K562 (cell line): ENCODE measurements at regions of chr1 and their contacts with region 1.

Region 1: GRCh38 chr1:40691538-40692428 is at the start of gene NFYC:
- DNase-seq: peak; percentile 99 to 100 (median 99)
- ATAC-seq: peak; percentile 94
- H3K4me3 ChIP-seq: peak within 1 kb of the TSS; percentile 76
- H3K27ac ChIP-seq: peak within 1 kb of the TSS; percentile 100
- H3K4me1 ChIP-seq: peaks cover 8 to 27% of the 10 kb centered on the region in 2 experiments
- H3K27me3 ChIP-seq: no peaks in the 10 kb centered on the region
- CTCF ChIP-seq: peak in 2 of 3 experiments; percentile 8 to 11; a peak in 2 of 6 replicates
- EP300 ChIP-seq: peak; percentile 60; the same call in 1 of the 2 replicates
- POLR2A ChIP-seq: peak; percentile 98
- RAD21 ChIP-seq: peak in 1 of 2 experiments; percentile 21; a peak in 2 of 4 replicates
- polyA plus RNA-seq, gene NFYC: 4.8 to 7.2 TPM

Region 2: GRCh38 chr1:40676501-40676900 is 15.3 kb before region 1 on chr1:
- CTCF ChIA-PET with region 1: no interaction called
- POLR2A ChIA-PET with region 1: interaction called, 44 read pairs
- in situ Hi-C with region 1: no loop called
- intact Hi-C with region 1: no loop called
- DNase-seq: no peak
- ATAC-seq: no peak
- H3K4me3 ChIP-seq: no peak overlapping the region
- H3K27ac ChIP-seq: no peak overlapping the region
- H3K4me1 ChIP-seq: no peaks in the 10 kb centered on the region
- H3K27me3 ChIP-seq: peaks cover 0 to 5% of the 10 kb centered on the region in 2 experiments; a peak in 1 of 5 replicates
- CTCF ChIP-seq: no peak
- EP300 ChIP-seq: no peak
- POLR2A ChIP-seq: no peak
- RAD21 ChIP-seq: no peak

Region 3: DNA sequence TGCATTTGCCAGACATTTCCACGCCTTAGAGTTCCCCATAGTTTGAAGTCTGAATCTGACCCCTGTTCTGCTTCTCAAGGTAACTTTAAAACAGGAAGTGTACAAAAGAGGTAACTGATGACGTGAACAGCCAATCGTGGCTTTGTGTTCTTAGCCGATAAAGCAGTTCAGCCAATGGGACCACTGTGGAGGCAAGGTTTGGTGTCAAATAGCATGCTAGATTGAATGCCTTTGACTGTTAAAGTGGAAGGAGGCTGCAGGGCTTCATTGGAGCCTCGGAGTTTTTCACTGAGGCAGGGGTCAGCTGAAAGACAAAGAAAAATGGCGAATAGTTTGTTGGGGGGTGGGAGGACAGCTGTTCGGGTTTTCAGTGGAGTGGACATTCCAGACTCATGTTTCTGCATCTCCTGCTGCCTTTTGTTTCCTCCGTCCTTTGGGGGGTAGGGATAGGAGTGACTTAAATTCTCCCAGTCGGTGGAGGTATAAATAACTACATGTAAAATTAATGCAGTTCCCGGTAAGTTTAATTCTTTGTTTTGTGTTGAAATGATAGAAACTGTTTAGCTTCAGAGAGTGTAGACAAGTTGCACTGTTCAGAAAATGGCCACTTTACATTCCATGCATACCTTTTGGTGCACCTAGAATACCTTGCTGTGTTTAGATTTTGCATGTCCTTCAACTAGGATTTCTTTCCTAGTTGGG is 17.5 kb after region 1 on chr1:
- CTCF ChIA-PET with region 1: no interaction called
- POLR2A ChIA-PET with region 1: interaction called, 212 read pairs
- in situ Hi-C with region 1: no loop called
- intact Hi-C with region 1: no loop called
- DNase-seq: peak; percentile 87 to 98 (median 92)
- ATAC-seq: peak; percentile 94
- H3K4me3 ChIP-seq: peak overlapping the region; percentile 49
- H3K27ac ChIP-seq: peak overlapping the region; percentile 90
- H3K4me1 ChIP-seq: peaks cover 0 to 41% of the 10 kb centered on the region in 2 experiments; a peak in 4 of 5 replicates
- H3K27me3 ChIP-seq: no peaks in the 10 kb centered on the region
- CTCF ChIP-seq: no peak
- EP300 ChIP-seq: 0 out of 2 replicates have a peak, but pooled peaks have one; percentile 23
- POLR2A ChIP-seq: peak; percentile 85
- RAD21 ChIP-seq: no peak; a peak in 1 of 4 replicates

Region 4: GRCh38 chr1:40715491-40716059 is 23.8 kb after region 1 on chr1:
- CTCF ChIA-PET with region 1: no interaction called
- POLR2A ChIA-PET with region 1: interaction called, 212 read pairs
- in situ Hi-C with region 1: no loop called
- intact Hi-C with region 1: no loop called
- DNase-seq: no peak
- ATAC-seq: no peak
- H3K4me3 ChIP-seq: no peak overlapping the region
- H3K27ac ChIP-seq: no peak overlapping the region
- H3K4me1 ChIP-seq: peaks cover 0 to 23% of the 10 kb centered on the region in 2 experiments; a peak in 3 of 5 replicates
- H3K27me3 ChIP-seq: no peaks in the 10 kb centered on the region
- CTCF ChIP-seq: no peak
- EP300 ChIP-seq: no peak
- POLR2A ChIP-seq: no peak
- RAD21 ChIP-seq: no peak

Region 5: GRCh38 chr1:41444246-41444645 is 752.5 kb after region 1 on chr1:
- CTCF ChIA-PET with region 1: no interaction called
- POLR2A ChIA-PET with region 1: no interaction called
- in situ Hi-C with region 1: no loop called
- intact Hi-C with region 1: no loop called
- DNase-seq: peak; percentile 31 to 56 (median 44)
- ATAC-seq: no peak
- H3K4me3 ChIP-seq: no peak overlapping the region
- H3K27ac ChIP-seq: no peak overlapping the region
- H3K4me1 ChIP-seq: no peaks in the 10 kb centered on the region
- H3K27me3 ChIP-seq: peaks cover 2 to 7% of the 10 kb centered on the region in 2 experiments; a peak in 2 of 5 replicates
- CTCF ChIP-seq: peak; percentile 48 to 65 (median 56)
- EP300 ChIP-seq: no peak
- POLR2A ChIP-seq: no peak
- RAD21 ChIP-seq: no peak